Activated T-helper 1 cell treated with anti-CD3 and anti-CD28 coated beads, Interleukin-12 subunit alpha, Interleukin-12 subunit beta, Interleukin-2, Interleukin-4 antibody, amounts not matched to agents 30 ng/mL and 10 ng/mL and 1 ng/mL, durations not matched to agents 14 hours and 24 hours and 36 hours (primary cell): ENCODE measurements at regions of chr11 and their contacts with region 1.

Region 1: DNA sequence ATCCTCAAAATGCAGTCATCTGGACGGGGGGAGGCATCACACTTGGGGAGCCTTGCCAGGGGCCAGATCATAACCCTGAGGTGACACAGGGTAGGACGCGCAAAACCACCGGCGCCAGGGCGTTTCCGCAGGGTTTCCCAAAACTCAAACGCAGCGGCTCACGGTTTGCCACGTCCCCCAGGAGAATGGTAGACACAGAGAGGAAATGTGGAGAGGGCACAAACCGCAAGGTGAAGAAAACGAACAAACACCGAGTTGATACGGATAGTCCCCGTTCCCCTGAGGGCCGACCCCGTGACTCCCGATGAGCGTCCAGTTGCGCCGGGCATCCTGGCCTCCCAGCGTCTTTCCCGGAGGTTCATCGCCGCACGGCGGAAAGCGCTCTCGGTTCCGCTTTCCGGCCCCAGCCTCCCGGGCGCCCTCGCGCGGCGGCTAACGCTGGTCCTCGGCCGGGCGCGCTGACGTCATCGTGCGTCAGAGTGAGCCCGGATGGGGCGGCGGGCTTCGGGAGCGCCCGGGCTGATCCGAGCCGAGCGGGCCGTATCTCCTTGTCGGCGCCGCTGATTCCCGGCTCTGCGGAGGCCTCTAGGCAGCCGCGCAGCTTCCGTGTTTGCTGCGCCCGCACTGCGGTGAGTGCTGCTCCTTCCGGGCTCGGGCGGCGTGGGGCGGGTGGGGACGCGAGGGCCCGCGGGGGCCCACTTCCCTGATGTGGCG is at the start of gene BIRC2:
- DNase-seq: peak; percentile 94
- H3K4me3 Mint-ChIP-seq: peak within 1 kb of the TSS; percentile 98
- H3K27ac Mint-ChIP-seq: peak within 1 kb of the TSS; percentile 99
- H3K4me1 Mint-ChIP-seq: peaks cover 45% of the 10 kb centered on the region
- H3K27me3 Mint-ChIP-seq: no peaks in the 10 kb centered on the region
- total RNA-seq, gene BIRC2: 30.6 and 33.3 TPM in 2 replicates

Region 2: DNA sequence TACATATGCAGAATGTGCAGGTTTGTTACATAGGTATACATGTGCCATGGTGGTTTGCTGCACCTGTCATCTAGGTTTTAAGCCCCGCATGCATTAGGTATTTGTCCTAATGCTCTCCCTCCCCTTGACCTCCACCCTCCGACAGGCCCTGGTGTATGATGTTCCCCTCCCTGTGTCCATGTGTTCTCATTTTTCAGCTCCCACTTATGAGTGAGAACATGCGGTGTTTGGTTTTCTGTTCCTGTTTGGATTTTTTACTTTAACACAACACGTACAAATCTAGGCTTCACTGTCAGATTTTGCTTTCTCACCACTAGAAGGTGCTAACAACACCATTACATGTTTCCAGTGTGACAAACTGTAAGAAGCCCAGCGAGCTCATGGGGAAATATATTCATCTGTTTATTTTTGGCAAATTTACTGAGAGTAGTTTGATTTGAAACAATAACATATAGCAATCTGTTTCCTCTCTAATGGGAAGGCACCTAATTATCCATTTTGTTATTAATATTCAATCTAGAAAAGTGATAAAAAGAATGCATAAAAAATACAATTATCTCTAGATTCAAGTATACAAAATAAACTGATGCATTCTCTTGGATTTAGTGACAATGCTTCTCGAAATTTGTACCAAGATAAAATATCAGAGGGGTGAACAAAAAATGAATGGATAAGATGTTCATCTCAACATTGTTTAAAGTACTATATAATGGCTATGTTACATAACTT is 52.9 kb before region 1 on chr11:
- intact Hi-C with region 1: loop called (anchors 1 kb)
- DNase-seq: no peak
- H3K4me3 Mint-ChIP-seq: peak overlapping the region; percentile 84
- H3K27ac Mint-ChIP-seq: peak overlapping the region; percentile 90
- H3K4me1 Mint-ChIP-seq: peaks cover 41% of the 10 kb centered on the region
- H3K27me3 Mint-ChIP-seq: no peaks in the 10 kb centered on the region

Region 3: GRCh38 chr11:102332611-102332994 is 14.3 kb before region 1 on chr11:
- intact Hi-C with region 1: no loop called
- DNase-seq: no peak
- H3K4me3 Mint-ChIP-seq: no peak overlapping the region
- H3K27ac Mint-ChIP-seq: peak overlapping the region; percentile 62
- H3K4me1 Mint-ChIP-seq: peaks cover 29% of the 10 kb centered on the region
- H3K27me3 Mint-ChIP-seq: no peaks in the 10 kb centered on the region

Region 4: DNA sequence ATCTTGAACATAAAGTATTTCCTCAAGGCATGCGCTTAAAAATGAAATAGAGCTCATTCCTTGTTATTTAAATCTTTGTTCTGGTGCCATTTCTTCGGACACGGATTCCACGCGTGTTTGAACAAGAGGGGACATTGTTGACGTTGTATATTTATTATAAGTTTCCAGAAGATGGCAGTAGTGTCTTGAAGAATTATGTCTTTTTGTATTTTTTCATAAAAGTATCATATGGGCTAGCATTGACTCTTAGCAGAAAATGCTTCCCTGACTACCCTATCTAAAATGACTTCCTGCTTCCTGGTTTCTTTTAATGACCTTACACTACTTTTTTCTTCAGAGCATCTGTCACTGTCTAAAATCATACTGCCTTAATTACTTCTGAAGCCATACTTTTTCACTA is 20.5 kb after region 1 on chr11:
- intact Hi-C with region 1: loop called (anchors 1 kb)
- DNase-seq: no peak
- H3K4me3 Mint-ChIP-seq: no peak overlapping the region
- H3K27ac Mint-ChIP-seq: no peak overlapping the region
- H3K4me1 Mint-ChIP-seq: peaks cover 26% of the 10 kb centered on the region
- H3K27me3 Mint-ChIP-seq: no peaks in the 10 kb centered on the region

Region 5: GRCh38 chr11:102416976-102417375 is 70.1 kb after region 1 on chr11:
- intact Hi-C with region 1: loop called (anchors 1 kb)
- DNase-seq: no peak
- H3K4me3 Mint-ChIP-seq: peak overlapping the region; percentile 26
- H3K27ac Mint-ChIP-seq: peak overlapping the region; percentile 67
- H3K4me1 Mint-ChIP-seq: peaks cover 84% of the 10 kb centered on the region
- H3K27me3 Mint-ChIP-seq: no peaks in the 10 kb centered on the region

Region 6: GRCh38 chr11:102500829-102501228 is 153.9 kb after region 1 on chr11:
- intact Hi-C with region 1: no loop called
- DNase-seq: no peak
- H3K4me3 Mint-ChIP-seq: no peak overlapping the region
- H3K27ac Mint-ChIP-seq: no peak overlapping the region
- H3K4me1 Mint-ChIP-seq: peaks cover under 1% of the 10 kb centered on the region
- H3K27me3 Mint-ChIP-seq: peaks cover 21% of the 10 kb centered on the region

Region 7: GRCh38 chr11:102560555-102561011 is 213.7 kb after region 1 on chr11:
- intact Hi-C with region 1: loop called (anchors 2 kb)
- DNase-seq: no peak
- H3K4me3 Mint-ChIP-seq: peak overlapping the region; percentile 63
- H3K27ac Mint-ChIP-seq: no peak overlapping the region
- H3K4me1 Mint-ChIP-seq: peaks cover 50% of the 10 kb centered on the region
- H3K27me3 Mint-ChIP-seq: peaks cover 2% of the 10 kb centered on the region

Region 8: DNA sequence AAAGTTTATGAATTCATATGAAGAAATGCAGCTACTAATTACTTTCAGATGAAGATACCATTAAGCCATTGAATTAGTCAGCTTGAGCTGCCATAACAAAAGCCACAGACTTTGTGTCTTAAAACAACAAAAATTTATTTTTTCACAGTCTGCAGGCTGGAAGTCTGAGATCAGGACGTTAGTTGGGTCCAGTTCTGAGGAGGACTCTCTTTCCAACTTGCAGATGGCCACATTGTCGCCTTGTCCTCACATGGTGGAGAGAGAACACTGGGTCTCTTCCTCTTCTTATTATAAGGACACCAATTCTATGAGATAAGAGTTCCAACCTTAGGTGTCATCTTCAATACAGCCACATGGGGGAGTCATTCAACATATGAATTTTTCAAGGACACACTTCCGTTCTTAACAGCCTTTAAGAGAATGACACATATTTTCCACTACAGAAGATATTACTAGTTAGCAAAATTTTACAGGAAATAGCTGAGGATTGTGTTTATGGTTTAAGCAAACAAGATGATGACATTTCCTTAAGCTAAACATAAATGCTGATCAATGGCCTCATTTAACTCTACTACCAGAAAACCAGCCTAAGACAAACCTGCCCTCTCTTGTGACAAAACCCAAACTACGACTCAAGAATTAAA is 689.0 kb after region 1 on chr11:
- intact Hi-C with region 1: loop called (anchors 10 kb)
- DNase-seq: peak; percentile 47
- H3K4me3 Mint-ChIP-seq: peak overlapping the region; percentile 9
- H3K27ac Mint-ChIP-seq: peak overlapping the region; percentile 83
- H3K4me1 Mint-ChIP-seq: peaks cover 29% of the 10 kb centered on the region
- H3K27me3 Mint-ChIP-seq: no peaks in the 10 kb centered on the region